ENCODE measurements at regions of chrX and their contacts with region 1.

Region 1: GRCh38 chrX:108070891-108071290 is 20.5 kb downstream of the PSMD10 start:
- DNase-seq: peak; percentile 91
- ATAC-seq: peak; percentile 98
- H3K4me3 ChIP-seq: no peak overlapping the region
- H3K27ac ChIP-seq: peak overlapping the region; percentile 52
- H3K4me1 ChIP-seq: peaks cover 31% of the 10 kb centered on the region
- H3K27me3 ChIP-seq: no peaks in the 10 kb centered on the region
- CTCF ChIP-seq: no peak

Region 2: DNA sequence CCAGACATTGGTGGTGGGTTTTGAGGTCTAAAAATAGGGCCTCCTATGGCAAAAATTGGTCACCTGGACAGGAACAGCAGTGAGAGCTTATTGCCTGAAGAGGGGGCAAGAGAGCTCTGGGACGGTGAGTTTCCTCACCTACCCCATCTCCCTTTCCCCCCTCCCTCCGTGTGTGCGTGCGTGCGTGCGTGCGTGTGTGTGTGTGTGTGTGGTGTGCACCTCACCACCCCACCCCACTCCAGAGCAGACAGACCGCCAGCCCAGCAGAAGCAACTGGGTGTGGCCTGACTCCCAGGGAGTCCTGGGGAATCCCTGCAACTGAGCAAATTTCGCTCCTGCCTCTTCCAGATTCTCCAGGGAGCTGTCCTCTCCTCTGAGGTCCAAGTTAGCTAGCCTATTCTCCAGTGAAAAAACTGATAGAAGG is 397.9 kb before region 1 on chrX:
- CTCF ChIA-PET with region 1: no interaction called
- POLR2A ChIA-PET with region 1: no interaction called
- intact Hi-C with region 1: loop called (anchors 5 kb)
- DNase-seq: peak; percentile 84
- ATAC-seq: peak; percentile 39
- H3K4me3 ChIP-seq: 0 out of 2 replicates have a peak overlapping the region, but pooled peaks have one; percentile 12
- H3K27ac ChIP-seq: peak overlapping the region; percentile 30; the same call in 1 of the 2 replicates
- H3K4me1 ChIP-seq: peaks cover 28% of the 10 kb centered on the region
- H3K27me3 ChIP-seq: no peaks in the 10 kb centered on the region
- CTCF ChIP-seq: peak; percentile 66

Region 3: DNA sequence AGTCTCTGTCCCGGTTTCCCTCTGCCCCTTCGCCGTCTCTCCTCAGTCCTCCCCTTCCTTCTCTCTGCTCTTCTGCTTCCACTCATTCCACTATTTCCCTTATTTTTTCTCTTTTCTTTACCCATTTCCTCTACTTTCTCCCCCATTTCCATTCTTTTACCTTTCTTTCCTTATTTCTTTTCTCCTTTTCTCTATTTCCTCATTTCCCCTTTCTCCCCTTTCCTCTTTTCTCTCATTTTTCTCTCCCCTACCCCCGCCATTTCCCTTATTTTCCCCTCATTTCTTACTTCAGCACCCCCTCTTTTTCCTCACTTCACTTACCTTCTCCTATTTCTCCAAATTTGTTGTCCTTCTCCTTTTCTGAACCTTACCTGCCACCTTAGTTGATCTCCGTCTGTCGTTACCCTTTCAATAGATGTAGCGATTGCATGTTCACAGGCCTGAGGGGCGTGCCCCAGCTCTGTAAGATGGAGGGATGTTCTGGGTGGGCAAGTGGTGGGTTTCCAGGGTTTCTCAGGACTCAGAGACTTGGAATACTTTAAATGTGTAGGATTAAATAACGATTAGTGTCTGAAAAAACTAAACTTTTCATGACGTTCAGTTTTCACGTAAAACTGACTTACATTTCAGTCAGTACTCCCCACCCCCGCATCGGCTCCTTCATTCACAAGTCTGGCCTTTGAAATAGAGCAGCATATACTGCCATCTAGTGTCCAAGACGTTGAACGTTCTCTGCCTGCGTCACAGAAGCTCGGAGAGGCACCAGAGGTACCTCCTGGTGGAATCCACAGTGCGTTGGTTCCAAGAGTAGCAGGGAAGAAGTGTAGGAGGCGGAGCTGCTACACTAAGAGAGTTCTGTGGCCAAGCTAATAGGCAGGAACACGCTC is 294.0 kb before region 1 on chrX:
- CTCF ChIA-PET with region 1: no interaction called
- POLR2A ChIA-PET with region 1: no interaction called
- intact Hi-C with region 1: loop called (anchors 5 kb)
- DNase-seq: peak; percentile 94
- ATAC-seq: peak; percentile 74
- H3K4me3 ChIP-seq: peak overlapping the region; percentile 77
- H3K27ac ChIP-seq: no peak overlapping the region
- H3K4me1 ChIP-seq: peaks cover 10% of the 10 kb centered on the region
- H3K27me3 ChIP-seq: no peaks in the 10 kb centered on the region
- CTCF ChIP-seq: peak; percentile 77

Region 4: DNA sequence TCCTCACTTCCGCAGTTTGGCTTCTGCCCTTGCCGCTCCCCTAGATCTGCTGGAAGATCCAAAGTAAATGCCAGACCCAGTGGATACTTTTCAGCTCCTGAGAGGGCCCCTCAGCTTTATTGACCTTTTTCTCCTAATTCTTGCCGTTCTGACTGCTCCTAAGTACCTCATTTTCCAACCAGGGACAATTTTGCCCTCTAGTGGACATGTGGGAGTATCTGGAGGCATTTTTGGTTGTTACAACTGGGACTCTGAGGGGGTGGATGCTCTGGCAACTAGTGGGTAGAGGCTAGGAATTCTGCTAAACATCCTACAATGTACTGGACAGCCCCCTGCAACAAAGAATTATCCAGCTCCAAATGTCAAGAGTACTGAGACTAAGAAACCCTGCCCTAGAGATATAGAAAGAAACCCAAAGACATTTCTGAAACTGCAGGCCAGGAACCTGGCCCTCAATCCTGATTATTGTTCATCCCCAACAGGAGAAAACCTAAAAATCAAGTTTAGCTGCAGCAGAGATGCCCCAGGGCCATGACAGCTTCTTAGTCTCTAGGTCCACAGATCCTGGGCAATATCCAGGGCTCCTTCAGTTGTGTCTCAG is 92.1 kb before region 1 on chrX:
- CTCF ChIA-PET with region 1: no interaction called
- POLR2A ChIA-PET with region 1: no interaction called
- intact Hi-C with region 1: loop called (anchors 1 kb)
- DNase-seq: peak; percentile 66
- ATAC-seq: peak; percentile 80
- H3K4me3 ChIP-seq: no peak overlapping the region
- H3K27ac ChIP-seq: no peak overlapping the region
- H3K4me1 ChIP-seq: no peaks in the 10 kb centered on the region
- H3K27me3 ChIP-seq: no peaks in the 10 kb centered on the region
- CTCF ChIP-seq: peak; percentile 80

Region 5: DNA sequence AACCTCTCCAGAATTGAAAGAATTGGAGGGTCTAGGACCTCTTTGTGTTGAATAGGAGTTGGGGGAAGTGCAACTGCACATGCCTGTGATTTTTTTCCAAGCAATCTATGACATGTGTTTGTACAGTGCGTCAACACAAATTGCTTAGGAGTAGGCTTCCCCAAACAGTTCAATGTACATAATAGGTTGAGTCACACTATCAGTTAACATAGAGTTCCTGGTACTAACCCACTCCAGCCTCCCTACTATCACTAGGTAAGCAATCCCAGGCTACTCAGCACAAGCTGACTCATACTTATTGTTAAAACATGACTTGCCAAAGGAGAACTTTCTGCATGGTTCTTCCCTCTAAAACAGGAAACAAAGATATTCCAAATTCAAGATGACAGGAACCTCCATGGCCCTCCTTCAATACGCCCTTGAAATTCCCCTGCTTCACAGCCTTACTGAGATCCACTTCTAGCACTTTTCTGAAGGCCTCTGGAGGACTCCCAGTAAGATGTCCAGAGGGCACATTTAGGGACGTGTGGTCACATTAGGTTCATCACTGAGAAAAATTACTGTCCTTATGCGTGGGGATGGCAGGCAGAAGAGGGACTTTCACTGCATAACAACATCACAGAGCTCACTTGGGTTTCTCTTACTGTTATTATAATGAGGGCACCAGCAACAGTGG is 34.5 kb before region 1 on chrX:
- CTCF ChIA-PET with region 1: no interaction called
- POLR2A ChIA-PET with region 1: no interaction called
- intact Hi-C with region 1: loop called (anchors 1 kb)
- DNase-seq: peak; percentile 95
- ATAC-seq: peak; percentile 92
- H3K4me3 ChIP-seq: no peak overlapping the region
- H3K27ac ChIP-seq: peak overlapping the region; percentile 98
- H3K4me1 ChIP-seq: peaks cover 53% of the 10 kb centered on the region
- H3K27me3 ChIP-seq: no peaks in the 10 kb centered on the region
- CTCF ChIP-seq: no peak